Activated CD8-positive, alpha-beta T cell treated with anti-CD3 and anti-CD28 coated beads for 36 hours (primary cell): ENCODE measurements at regions of chr10 and their contacts with region 1.

Region 1: DNA sequence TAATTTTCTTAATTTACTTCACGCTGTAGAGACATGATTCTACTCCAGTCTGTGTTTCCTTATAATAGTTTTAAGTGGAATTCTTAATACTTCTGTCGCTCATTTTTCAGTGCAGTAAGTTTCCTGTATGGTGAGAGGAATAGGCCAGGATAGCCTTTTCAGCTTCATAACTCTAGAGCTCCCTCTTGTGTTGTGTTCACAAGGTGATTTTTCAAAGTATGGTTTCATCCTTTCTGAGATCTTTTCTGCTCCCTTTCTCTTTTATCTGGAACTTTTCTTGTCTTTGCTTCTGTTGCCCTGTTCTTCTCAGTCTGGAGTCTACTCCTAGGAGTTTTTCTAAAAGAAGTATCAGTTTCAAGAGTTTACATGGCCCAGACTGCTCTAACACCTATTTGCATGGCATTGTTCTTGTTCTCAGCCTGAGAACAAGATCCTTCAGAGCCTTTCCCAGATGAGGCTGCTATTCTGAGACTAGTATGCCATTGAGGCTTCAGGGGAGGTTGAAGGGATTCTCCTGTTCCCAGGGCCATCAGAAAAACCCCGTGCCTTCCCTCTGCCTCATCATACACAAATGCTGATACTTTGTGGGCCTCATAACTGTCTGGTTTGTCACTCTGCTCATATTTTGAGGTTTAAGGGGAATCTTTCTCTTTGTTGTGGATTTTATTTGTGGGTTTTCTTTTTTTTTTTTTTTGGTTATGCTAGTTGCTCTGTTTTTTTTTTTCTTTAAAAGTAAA is 21.8 kb downstream of the NET1 start:
- DNase-seq: no peak
- ATAC-seq: peak; percentile 53
- H3K4me3 Mint-ChIP-seq: no peak overlapping the region
- H3K27ac Mint-ChIP-seq: no peak overlapping the region
- H3K4me1 Mint-ChIP-seq: peaks cover 11% of the 10 kb centered on the region
- H3K27me3 Mint-ChIP-seq: peaks cover 4% of the 10 kb centered on the region
- CTCF ChIP-seq: peak; percentile 89

Region 2: GRCh38 chr10:5416981-5417380 is 17.2 kb before region 1 on chr10:
- CTCF ChIA-PET with region 1: interaction called, 19 read pairs
- POLR2A ChIA-PET with region 1: no interaction called
- intact Hi-C with region 1: no loop called
- DNase-seq: no peak
- ATAC-seq: no peak
- H3K4me3 Mint-ChIP-seq: no peak overlapping the region
- H3K27ac Mint-ChIP-seq: no peak overlapping the region
- H3K4me1 Mint-ChIP-seq: peaks cover 5% of the 10 kb centered on the region
- H3K27me3 Mint-ChIP-seq: no peaks in the 10 kb centered on the region
- CTCF ChIP-seq: no peak

Region 3: DNA sequence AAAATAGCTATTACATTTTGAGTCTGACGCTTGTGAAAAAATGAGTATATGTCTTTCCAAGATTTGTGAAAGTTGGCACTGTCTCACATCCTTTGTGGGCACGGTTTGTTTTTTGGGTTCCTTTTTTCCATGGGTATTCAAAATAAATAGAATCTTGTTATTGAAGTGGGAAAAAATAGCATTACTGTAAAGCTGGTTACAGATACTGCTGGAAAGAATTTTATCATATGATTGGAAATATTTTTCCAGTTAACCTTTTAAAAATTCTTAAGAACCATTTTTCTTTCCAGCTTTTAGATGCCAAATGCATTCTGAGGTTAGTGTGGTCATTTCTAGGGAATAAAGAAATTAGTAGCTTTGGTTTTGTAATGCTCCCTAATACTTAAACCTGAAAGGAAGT is 10.4 kb before region 1 on chr10:
- CTCF ChIA-PET with region 1: interaction called, 19 read pairs
- POLR2A ChIA-PET with region 1: no interaction called
- intact Hi-C with region 1: no loop called
- DNase-seq: no peak
- ATAC-seq: no peak
- H3K4me3 Mint-ChIP-seq: no peak overlapping the region
- H3K27ac Mint-ChIP-seq: no peak overlapping the region
- H3K4me1 Mint-ChIP-seq: peaks cover 2% of the 10 kb centered on the region
- H3K27me3 Mint-ChIP-seq: no peaks in the 10 kb centered on the region
- CTCF ChIP-seq: no peak

Region 4: DNA sequence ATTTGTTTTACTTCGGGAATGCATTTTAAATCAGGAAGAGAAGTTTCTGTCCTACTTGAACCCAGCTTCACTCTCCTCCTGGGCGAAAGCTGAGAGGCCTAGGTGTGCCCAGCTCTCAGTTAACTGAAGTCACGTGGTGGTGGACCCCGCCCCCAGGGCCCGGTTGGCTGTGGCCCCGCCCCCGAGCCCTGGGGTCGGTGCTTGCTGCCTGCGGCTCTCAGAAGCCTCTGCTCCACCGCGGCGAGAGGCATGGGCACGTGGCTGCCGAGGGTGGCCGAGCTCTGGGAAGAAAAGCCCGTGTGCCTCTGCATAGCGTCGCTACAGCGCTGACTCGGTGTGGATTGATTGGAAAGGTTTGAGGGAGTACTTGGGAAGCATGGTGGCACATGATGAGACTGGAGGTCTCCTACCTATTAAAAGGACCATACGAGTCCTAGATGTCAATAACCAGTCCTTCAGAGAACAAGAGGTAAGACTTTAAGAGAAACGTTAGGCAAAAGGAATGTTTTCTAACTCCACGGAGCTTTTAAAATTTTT is 12.3 kb after region 1 on chr10:
- CTCF ChIA-PET with region 1: interaction called, 41 read pairs
- POLR2A ChIA-PET with region 1: no interaction called
- intact Hi-C with region 1: no loop called
- DNase-seq: peak; percentile 88
- ATAC-seq: peak; percentile 72
- H3K4me3 Mint-ChIP-seq: peak overlapping the region; percentile 79
- H3K27ac Mint-ChIP-seq: peak overlapping the region; percentile 75
- H3K4me1 Mint-ChIP-seq: peaks cover 49% of the 10 kb centered on the region
- H3K27me3 Mint-ChIP-seq: peaks cover 5% of the 10 kb centered on the region
- CTCF ChIP-seq: no peak

Region 5: DNA sequence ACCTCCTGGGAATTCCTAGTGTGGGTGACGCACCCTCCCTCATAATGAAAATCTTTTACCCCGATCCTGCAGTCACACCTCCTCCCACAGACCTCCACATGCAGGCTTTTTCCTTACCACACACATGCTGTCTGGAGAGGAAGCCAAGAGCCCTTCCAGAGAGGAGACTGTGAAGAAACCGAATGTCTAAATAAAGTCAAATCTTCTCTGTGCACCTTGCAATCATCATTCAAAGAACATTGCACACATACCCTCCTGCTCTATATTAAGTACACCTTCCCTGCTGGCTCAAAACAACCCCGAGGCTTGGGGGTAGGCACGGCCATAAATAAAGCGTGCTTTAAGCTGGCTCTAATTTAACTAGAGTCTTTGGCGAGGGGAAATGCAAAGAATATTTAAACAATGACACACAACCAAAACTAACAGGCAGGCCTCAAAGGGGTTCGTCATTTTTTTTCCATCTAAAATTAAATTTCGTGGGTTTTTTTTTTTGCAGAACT is 125.5 kb after region 1 on chr10:
- CTCF ChIA-PET with region 1: no interaction called
- POLR2A ChIA-PET with region 1: no interaction called
- intact Hi-C with region 1: no loop called
- DNase-seq: no peak
- ATAC-seq: no peak
- H3K4me3 Mint-ChIP-seq: no peak overlapping the region
- H3K27ac Mint-ChIP-seq: no peak overlapping the region
- H3K4me1 Mint-ChIP-seq: peaks cover 12% of the 10 kb centered on the region
- H3K27me3 Mint-ChIP-seq: no peaks in the 10 kb centered on the region
- CTCF ChIP-seq: no peak